BJ (cell line): ENCODE measurements at regions of chr15 and their contacts with region 1.

Region 1: GRCh38 chr15:85330901-85331588 is 49.4 kb upstream of the AKAP13 start:
- DNase-seq: no peak
- H3K4me3 ChIP-seq: no peak overlapping the region
- H3K27me3 ChIP-seq: no peaks in the 10 kb centered on the region
- CTCF ChIP-seq: peak; percentile 99

Region 2: DNA sequence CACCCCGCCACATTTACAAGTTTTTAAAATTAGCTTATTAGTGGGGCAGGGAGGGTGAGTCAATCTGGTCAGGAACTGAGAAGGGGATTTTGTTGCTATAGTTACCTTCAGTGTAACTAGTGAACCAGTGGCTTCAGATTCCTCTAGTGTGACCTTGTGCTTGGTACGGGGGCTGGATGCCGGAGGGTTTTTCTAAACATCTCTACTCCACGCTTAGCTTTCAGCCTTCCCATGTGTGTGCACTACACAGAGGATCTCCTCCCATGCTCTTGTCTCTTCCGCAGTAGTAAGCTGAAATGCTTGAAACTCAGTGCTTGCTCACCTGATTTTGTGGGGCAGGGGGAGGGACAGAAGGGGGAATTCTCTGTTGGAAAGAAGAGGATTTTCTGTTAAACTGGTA is 18.6 kb before region 1 on chr15:
- CTCF ChIA-PET with region 1: interaction called, 38 read pairs
- POLR2A ChIA-PET with region 1: no interaction called
- DNase-seq: no peak
- H3K4me3 ChIP-seq: no peak overlapping the region
- H3K27me3 ChIP-seq: no peaks in the 10 kb centered on the region
- CTCF ChIP-seq: no peak

Region 3: GRCh38 chr15:85402195-85402881 is 71.3 kb after region 1 on chr15:
- CTCF ChIA-PET with region 1: interaction called, 14 read pairs
- POLR2A ChIA-PET with region 1: no interaction called
- DNase-seq: no peak
- H3K4me3 ChIP-seq: no peak overlapping the region
- H3K27me3 ChIP-seq: no peaks in the 10 kb centered on the region
- CTCF ChIP-seq: no peak

Region 4: DNA sequence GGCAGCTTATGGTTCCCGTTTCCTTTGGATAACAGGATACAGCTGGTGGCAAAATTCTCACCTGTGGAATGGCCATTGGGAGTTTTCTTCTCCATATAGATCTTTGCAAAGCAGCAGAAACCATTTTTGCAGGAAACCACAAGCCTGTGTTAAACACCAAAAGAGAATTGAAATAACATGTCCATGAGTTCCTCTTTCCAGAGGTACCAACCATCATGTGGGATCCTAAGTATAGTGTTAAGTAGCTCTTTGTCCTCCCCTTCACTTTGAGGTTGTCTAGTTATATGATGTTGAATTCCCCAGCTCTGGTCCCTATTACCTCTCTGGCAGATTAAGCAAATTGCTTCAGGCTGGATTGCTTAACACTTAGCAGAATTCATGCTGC is 144.3 kb after region 1 on chr15:
- CTCF ChIA-PET with region 1: interaction called, 15 read pairs
- POLR2A ChIA-PET with region 1: no interaction called
- DNase-seq: no peak
- H3K4me3 ChIP-seq: no peak overlapping the region
- H3K27me3 ChIP-seq: no peaks in the 10 kb centered on the region
- CTCF ChIP-seq: no peak

Region 5: DNA sequence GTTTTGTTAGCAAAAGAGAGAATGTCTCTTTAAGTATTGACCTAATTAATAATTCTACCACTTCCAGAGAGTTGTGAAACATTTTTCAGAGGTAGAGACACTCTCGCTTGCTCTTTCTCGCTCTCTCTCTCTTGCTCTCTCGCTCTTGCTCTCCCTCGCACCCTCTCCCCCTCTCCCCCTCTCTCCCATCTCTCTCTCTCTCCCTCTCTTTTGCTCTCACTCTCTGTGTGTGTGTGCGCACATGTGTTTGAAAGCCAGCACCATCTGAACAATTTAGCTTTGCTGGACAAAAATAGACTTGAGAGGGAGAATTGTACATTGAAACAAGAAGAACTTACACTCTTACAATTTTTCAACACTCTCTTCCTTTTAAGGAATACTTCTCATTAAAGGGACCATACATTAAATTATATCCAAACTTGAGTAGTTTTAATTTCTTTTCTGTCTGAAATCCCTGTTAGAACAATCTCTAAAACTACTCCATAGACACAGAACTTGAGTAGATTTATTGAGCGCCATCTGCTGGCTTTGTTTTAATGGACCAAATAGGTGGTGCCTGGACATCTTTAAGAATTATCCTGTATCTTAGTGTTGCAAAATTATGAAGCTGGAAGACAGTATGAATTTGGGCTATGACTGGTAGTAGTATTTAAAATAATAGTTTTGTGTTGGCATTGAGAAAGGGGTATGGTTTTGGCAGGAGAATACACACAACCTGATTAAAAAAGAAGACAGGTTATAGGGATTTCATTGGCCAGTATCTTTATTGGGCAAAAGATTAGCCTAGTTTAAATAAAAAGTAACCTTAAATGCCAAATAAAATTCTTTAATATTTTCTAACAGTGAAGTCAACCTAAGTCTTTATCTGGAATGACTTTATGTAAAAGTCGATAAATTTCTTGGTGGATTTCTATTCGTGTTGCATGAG is 174.0 kb after region 1 on chr15:
- CTCF ChIA-PET with region 1: interaction called, 25 read pairs
- POLR2A ChIA-PET with region 1: no interaction called
- DNase-seq: no peak
- H3K4me3 ChIP-seq: no peak overlapping the region
- H3K27me3 ChIP-seq: no peaks in the 10 kb centered on the region
- CTCF ChIP-seq: peak; percentile 66